ENCODE measurements at regions of chr1 and their contacts with region 1.

Region 1: GRCh38 chr1:235866913-235867845 is 473 bp upstream of the LYST start:
- DNase-seq: peak; percentile 99
- ATAC-seq: peak; percentile 71
- H3K4me3 Mint-ChIP-seq: peak overlapping the region; percentile 98
- H3K27ac Mint-ChIP-seq: peak overlapping the region; percentile 99
- H3K4me1 Mint-ChIP-seq: peaks cover 64% of the 10 kb centered on the region
- H3K27me3 Mint-ChIP-seq: no peaks in the 10 kb centered on the region
- CTCF ChIP-seq: no peak

Region 2: GRCh38 chr1:235831148-235831547 is 36.0 kb before region 1 on chr1:
- CTCF ChIA-PET with region 1: interaction called, 4 read pairs
- POLR2A ChIA-PET with region 1: interaction called, 16 read pairs
- intact Hi-C with region 1: loop called (anchors 1 kb)
- DNase-seq: no peak
- ATAC-seq: peak; percentile 100
- H3K4me3 Mint-ChIP-seq: peak overlapping the region; percentile 13
- H3K27ac Mint-ChIP-seq: peak overlapping the region; percentile 84
- H3K4me1 Mint-ChIP-seq: peaks cover 20% of the 10 kb centered on the region
- H3K27me3 Mint-ChIP-seq: no peaks in the 10 kb centered on the region
- CTCF ChIP-seq: no peak

Region 3: DNA sequence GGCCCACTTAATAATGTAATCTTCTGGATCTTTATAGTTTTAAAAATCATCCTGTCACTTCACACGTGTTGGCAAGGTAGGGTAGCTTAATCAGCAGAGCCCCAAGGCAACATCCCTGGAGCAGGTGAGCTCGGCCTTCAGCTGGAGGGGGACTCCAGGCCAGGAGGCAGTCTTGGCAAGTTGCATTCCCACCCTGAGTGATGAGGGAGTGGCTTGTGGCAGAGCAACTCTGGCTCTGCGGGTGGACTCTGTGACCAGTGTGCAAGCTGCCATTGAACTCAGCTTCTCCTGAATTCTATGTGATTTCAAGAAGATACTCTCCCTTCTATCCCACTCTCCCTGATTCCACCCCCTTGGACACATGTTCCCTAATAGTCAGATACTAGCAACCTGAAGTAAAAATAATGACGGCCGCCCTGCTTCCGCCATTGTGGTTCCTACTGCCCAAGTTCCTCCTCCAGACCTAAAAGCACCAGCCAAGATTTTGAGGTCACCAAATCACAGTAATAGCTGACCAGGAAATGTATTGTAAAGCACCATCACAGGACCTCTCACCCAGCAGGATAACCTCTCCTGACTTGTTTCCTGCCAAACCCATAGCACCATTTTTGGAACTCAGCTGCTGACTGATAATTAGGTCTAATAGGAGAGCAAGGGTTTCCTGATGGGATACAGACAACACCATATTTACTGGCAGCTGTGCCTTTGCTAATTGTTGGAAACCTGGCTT is 11.1 kb after region 1 on chr1:
- CTCF ChIA-PET with region 1: no interaction called
- POLR2A ChIA-PET with region 1: interaction called, 24 read pairs
- intact Hi-C with region 1: loop called (anchors 1 kb)
- DNase-seq: no peak
- ATAC-seq: no peak
- H3K4me3 Mint-ChIP-seq: no peak overlapping the region
- H3K27ac Mint-ChIP-seq: no peak overlapping the region
- H3K4me1 Mint-ChIP-seq: peaks cover 60% of the 10 kb centered on the region
- H3K27me3 Mint-ChIP-seq: no peaks in the 10 kb centered on the region
- CTCF ChIP-seq: no peak

Region 4: GRCh38 chr1:235933017-235933765 is 66.0 kb after region 1 on chr1:
- CTCF ChIA-PET with region 1: interaction called, 5 read pairs
- POLR2A ChIA-PET with region 1: interaction called, 60 read pairs
- intact Hi-C with region 1: loop called (anchors 1 kb)
- DNase-seq: no peak
- ATAC-seq: no peak
- H3K4me3 Mint-ChIP-seq: peak overlapping the region; percentile 62
- H3K27ac Mint-ChIP-seq: peak overlapping the region; percentile 72
- H3K4me1 Mint-ChIP-seq: peaks cover 91% of the 10 kb centered on the region
- H3K27me3 Mint-ChIP-seq: no peaks in the 10 kb centered on the region
- CTCF ChIP-seq: no peak

Region 5: GRCh38 chr1:235971571-235972310 is 104.6 kb after region 1 on chr1:
- CTCF ChIA-PET with region 1: interaction called, 55 read pairs
- POLR2A ChIA-PET with region 1: interaction called, 53 read pairs
- intact Hi-C with region 1: loop called (anchors 1 kb)
- DNase-seq: peak; percentile 80
- ATAC-seq: peak; percentile 98
- H3K4me3 Mint-ChIP-seq: peak overlapping the region; percentile 78
- H3K27ac Mint-ChIP-seq: peak overlapping the region; percentile 96
- H3K4me1 Mint-ChIP-seq: peaks cover 19% of the 10 kb centered on the region
- H3K27me3 Mint-ChIP-seq: no peaks in the 10 kb centered on the region
- CTCF ChIP-seq: no peak

Region 6: GRCh38 chr1:236018885-236019453 is 151.8 kb after region 1 on chr1:
- CTCF ChIA-PET with region 1: no interaction called
- POLR2A ChIA-PET with region 1: no interaction called
- intact Hi-C with region 1: no loop called
- DNase-seq: no peak
- ATAC-seq: no peak
- H3K4me3 Mint-ChIP-seq: no peak overlapping the region
- H3K27ac Mint-ChIP-seq: no peak overlapping the region
- H3K4me1 Mint-ChIP-seq: no peaks in the 10 kb centered on the region
- H3K27me3 Mint-ChIP-seq: peaks cover 6% of the 10 kb centered on the region
- CTCF ChIP-seq: no peak

Region 7: GRCh38 chr1:236041631-236042618 is 174.7 kb after region 1 on chr1:
- CTCF ChIA-PET with region 1: no interaction called
- POLR2A ChIA-PET with region 1: no interaction called
- intact Hi-C with region 1: no loop called
- DNase-seq: no peak
- ATAC-seq: no peak
- H3K4me3 Mint-ChIP-seq: no peak overlapping the region
- H3K27ac Mint-ChIP-seq: no peak overlapping the region
- H3K4me1 Mint-ChIP-seq: no peaks in the 10 kb centered on the region
- H3K27me3 Mint-ChIP-seq: peaks cover 25% of the 10 kb centered on the region
- CTCF ChIP-seq: no peak

Region 8: DNA sequence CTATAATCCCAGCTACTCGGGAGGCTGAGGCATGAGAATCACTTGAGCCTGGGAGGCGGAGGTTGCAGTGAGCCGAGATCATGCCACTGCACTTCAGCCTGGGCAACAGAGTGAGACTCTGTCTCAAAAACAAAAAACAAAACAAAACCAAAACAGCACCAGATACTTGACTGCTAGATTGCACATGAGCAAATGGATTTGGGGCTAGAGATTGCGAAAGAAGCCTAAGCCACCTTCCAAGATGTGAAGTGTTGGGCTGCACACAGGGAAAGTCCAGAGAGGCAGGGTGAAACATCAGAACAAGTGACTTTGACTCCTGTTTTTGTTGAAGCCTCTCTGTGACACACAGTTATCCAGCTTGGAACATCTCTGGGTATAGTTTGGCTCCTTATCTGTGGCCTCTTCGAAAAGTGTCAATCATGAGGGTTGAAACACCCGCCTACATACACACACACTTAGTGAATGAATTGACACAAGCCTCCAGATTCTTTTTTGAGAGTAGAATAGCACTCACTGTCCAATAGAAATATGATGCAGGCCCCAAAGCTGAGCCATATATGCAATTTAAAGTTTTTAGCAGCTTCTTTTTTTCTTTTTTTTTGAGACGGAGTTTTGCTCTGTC is 241.0 kb after region 1 on chr1:
- CTCF ChIA-PET with region 1: no interaction called
- POLR2A ChIA-PET with region 1: no interaction called
- intact Hi-C with region 1: no loop called
- DNase-seq: no peak
- ATAC-seq: no peak
- H3K4me3 Mint-ChIP-seq: no peak overlapping the region
- H3K27ac Mint-ChIP-seq: no peak overlapping the region
- H3K4me1 Mint-ChIP-seq: peaks cover 2% of the 10 kb centered on the region
- H3K27me3 Mint-ChIP-seq: peaks cover 5% of the 10 kb centered on the region
- CTCF ChIP-seq: no peak

Region 9: DNA sequence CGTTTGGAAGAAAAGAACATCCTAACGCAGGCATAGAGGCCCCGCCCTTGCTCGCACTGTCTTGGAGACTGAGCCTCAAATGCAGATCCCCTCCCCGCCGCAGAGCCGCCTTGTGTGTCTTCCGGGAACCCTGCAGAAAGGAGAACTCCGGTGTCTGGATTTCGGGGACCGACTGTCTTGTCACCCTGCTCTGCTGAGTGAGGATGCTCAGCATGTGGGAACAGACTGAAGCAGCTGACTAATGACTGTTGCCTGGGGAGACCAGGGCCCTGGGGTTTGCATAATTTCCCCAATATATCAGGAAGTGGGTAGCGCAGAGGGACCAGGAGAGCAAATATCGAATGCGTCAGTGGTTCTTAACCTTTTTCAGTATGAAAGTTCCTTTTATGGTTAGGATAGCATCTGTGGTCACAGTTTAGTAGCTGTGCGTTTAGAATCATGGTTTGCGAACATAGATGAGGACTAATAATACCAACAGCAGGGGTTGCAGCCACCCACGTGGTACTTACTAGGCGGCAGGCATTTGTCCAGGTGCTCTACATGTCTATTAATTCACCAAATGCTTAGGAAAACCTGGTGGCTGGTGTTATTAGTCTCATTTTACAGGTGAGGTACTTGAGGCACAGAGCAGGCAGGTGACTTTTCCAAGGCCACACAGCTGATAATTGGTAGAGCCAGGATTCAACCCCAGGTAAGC is 289.5 kb after region 1 on chr1:
- CTCF ChIA-PET with region 1: no interaction called
- POLR2A ChIA-PET with region 1: no interaction called
- intact Hi-C with region 1: loop called (anchors 2 kb)
- DNase-seq: peak; percentile 44
- ATAC-seq: peak; percentile 85
- H3K4me3 Mint-ChIP-seq: peak overlapping the region; percentile 52
- H3K27ac Mint-ChIP-seq: peak overlapping the region; percentile 83
- H3K4me1 Mint-ChIP-seq: peaks cover 57% of the 10 kb centered on the region
- H3K27me3 Mint-ChIP-seq: peaks cover 2% of the 10 kb centered on the region
- CTCF ChIP-seq: no peak

Region 10: DNA sequence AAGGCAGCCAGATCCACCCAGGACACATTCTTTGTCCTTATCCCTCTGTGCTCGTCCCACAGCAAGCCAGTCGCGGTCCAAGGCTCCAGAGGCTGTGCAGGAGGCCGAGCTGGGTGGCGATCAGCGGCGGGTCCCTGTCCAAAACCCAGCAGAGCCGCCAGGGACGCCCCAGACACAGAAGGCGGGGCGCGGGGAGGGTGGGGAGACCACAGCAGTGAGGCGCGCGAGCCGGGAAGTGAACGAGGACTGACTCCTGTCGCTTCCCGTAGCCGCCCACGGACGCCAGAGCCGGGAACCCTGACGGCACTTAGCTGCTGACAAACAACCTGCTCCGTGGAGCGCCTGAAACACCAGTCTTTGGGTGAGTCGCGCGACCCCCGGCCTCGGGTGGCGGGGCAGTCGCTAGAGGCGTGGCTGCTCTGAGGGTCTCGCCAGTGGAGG is 656.5 kb after region 1 on chr1 and contains the start of gene LGALS8:
- CTCF ChIA-PET with region 1: no interaction called
- POLR2A ChIA-PET with region 1: no interaction called
- intact Hi-C with region 1: loop called (anchors 1 kb)
- DNase-seq: peak; percentile 69
- ATAC-seq: peak; percentile 60
- H3K4me3 Mint-ChIP-seq: peak within 1 kb of the TSS; percentile 95
- H3K27ac Mint-ChIP-seq: peak within 1 kb of the TSS; percentile 90
- H3K4me1 Mint-ChIP-seq: peaks cover 12% of the 10 kb centered on the region
- H3K27me3 Mint-ChIP-seq: no peaks in the 10 kb centered on the region
- CTCF ChIP-seq: no peak
- total RNA-seq, gene LGALS8: 36.0 and 37.4 TPM in 2 replicates